PC-9 (cell line): ENCODE measurements at regions of chr15 and their contacts with region 1.

Region 1: DNA sequence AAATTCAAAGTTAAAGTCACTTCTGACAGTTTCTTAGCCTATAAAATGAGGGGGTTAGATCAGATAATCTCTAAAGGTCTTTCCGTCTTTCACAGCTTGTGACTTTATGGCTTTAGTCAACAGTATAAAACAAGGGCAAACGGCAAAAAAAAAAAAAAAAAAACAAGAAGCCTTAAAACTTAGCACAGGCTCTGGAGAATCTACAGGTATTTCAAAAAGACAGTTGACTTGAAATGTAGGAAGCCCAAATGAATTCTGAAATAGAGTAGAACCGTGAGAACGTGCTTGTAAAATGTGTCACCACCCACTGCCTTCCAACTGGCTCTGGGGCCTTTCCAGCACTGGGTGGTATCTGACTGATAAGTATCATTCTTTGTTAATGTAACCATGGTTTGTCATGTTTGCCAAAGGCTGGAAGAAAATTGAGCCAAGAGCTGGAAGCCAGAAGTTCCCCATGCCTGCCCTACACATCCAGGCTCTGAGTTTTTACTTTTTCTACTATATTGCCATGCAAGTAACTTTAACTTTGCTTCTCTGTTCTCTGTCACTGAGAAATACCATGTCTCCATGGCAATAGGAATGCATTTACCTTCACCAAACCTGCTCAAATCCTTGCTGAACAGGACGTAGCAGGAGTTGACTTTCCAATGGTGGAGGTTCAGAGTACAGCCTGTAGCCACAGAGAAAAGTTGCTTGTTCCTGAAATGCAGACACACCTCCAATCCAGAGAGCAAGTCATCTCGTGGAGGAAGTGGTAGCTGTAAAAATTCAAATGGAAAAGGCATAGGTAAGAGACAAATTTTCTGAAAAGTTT is 35.9 kb upstream of the THSD4 start:
- DNase-seq: peak; percentile 73 to 93
- H3K4me3 ChIP-seq: no peak overlapping the region
- H3K27ac ChIP-seq: peak overlapping the region; percentile 73
- H3K4me1 ChIP-seq: peaks cover 26% of the 10 kb centered on the region
- H3K27me3 ChIP-seq: no peaks in the 10 kb centered on the region
- CTCF ChIP-seq: no peak

Region 2: GRCh38 chr15:71093121-71094024 is 14.0 kb after region 1 on chr15:
- CTCF ChIA-PET with region 1: no interaction called
- POLR2A ChIA-PET with region 1: interaction called, 10 read pairs
- intact Hi-C with region 1: loop called (anchors 1 kb)
- DNase-seq: peak; percentile 69 to 84
- H3K4me3 ChIP-seq: no peak overlapping the region
- H3K27ac ChIP-seq: 0 out of 2 replicates have a peak overlapping the region, but pooled peaks have one; percentile 14
- H3K4me1 ChIP-seq: peaks cover 28% of the 10 kb centered on the region
- H3K27me3 ChIP-seq: no peaks in the 10 kb centered on the region
- CTCF ChIP-seq: no peak

Region 3: GRCh38 chr15:71182522-71182921 is 103.1 kb after region 1 on chr15:
- CTCF ChIA-PET with region 1: no interaction called
- POLR2A ChIA-PET with region 1: no interaction called
- intact Hi-C with region 1: no loop called
- DNase-seq: no peak
- H3K4me3 ChIP-seq: no peak overlapping the region
- H3K27ac ChIP-seq: no peak overlapping the region
- H3K4me1 ChIP-seq: no peaks in the 10 kb centered on the region
- H3K27me3 ChIP-seq: no peaks in the 10 kb centered on the region
- CTCF ChIP-seq: no peak

Region 4: GRCh38 chr15:71348628-71349027 is 269.2 kb after region 1 on chr15:
- CTCF ChIA-PET with region 1: interaction called, 16 read pairs
- POLR2A ChIA-PET with region 1: no interaction called
- intact Hi-C with region 1: no loop called
- DNase-seq: peak; percentile 17 to 84
- H3K4me3 ChIP-seq: no peak overlapping the region
- H3K27ac ChIP-seq: peak overlapping the region; percentile 70
- H3K4me1 ChIP-seq: peaks cover 27% of the 10 kb centered on the region
- H3K27me3 ChIP-seq: no peaks in the 10 kb centered on the region
- CTCF ChIP-seq: no peak